Activated T-helper 1 cell treated with anti-CD3 and anti-CD28 coated beads, Interleukin-12 subunit alpha, Interleukin-12 subunit beta, Interleukin-2, Interleukin-4 antibody, amounts not matched to agents 30 ng/mL and 10 ng/mL and 1 ng/mL, durations not matched to agents 14 hours and 24 hours and 36 hours (primary cell): ENCODE measurements at regions of chr19 and their contacts with region 1.

Region 1: GRCh38 chr19:5803752-5804515 is 933 bp upstream of the NRTN start:
- DNase-seq: peak; percentile 92
- H3K4me3 Mint-ChIP-seq: peak overlapping the region; percentile 80
- H3K27ac Mint-ChIP-seq: peak overlapping the region; percentile 63
- H3K4me1 Mint-ChIP-seq: peaks cover 13% of the 10 kb centered on the region
- H3K27me3 Mint-ChIP-seq: peaks cover 35% of the 10 kb centered on the region

Region 2: GRCh38 chr19:5827891-5828660 is 24.1 kb after region 1 on chr19:
- intact Hi-C with region 1: loop called (anchors 1 kb)
- DNase-seq: peak; percentile 96
- H3K4me3 Mint-ChIP-seq: peak overlapping the region; percentile 99
- H3K27ac Mint-ChIP-seq: peak overlapping the region; percentile 99
- H3K4me1 Mint-ChIP-seq: peaks cover 13% of the 10 kb centered on the region
- H3K27me3 Mint-ChIP-seq: peaks cover 2% of the 10 kb centered on the region

Region 3: GRCh38 chr19:5967994-5968430 is 164.1 kb after region 1 on chr19:
- intact Hi-C with region 1: loop called (anchors 10 kb)
- DNase-seq: peak; percentile 52
- H3K4me3 Mint-ChIP-seq: no peak overlapping the region
- H3K27ac Mint-ChIP-seq: peak overlapping the region; percentile 54
- H3K4me1 Mint-ChIP-seq: peaks cover 81% of the 10 kb centered on the region
- H3K27me3 Mint-ChIP-seq: no peaks in the 10 kb centered on the region